ENCODE measurements at regions of chr7 and their contacts with region 1.

Region 1: GRCh38 chr7:133853706-133854276 is 273.3 kb upstream of the LRGUK start:
- DNase-seq: peak; percentile 54
- ATAC-seq: peak; percentile 91
- H3K4me3 ChIP-seq: no peak overlapping the region
- H3K27ac ChIP-seq: no peak overlapping the region
- H3K4me1 ChIP-seq: peaks cover 12 to 17% of the 10 kb centered on the region in 2 experiments; a peak in 3 of 4 replicates
- H3K27me3 ChIP-seq: no peaks in the 10 kb centered on the region
- CTCF ChIP-seq: peak; percentile 70 to 97 (median 73)
- POLR2A ChIP-seq: no peak
- RAD21 ChIP-seq: peak; percentile 52

Region 2: DNA sequence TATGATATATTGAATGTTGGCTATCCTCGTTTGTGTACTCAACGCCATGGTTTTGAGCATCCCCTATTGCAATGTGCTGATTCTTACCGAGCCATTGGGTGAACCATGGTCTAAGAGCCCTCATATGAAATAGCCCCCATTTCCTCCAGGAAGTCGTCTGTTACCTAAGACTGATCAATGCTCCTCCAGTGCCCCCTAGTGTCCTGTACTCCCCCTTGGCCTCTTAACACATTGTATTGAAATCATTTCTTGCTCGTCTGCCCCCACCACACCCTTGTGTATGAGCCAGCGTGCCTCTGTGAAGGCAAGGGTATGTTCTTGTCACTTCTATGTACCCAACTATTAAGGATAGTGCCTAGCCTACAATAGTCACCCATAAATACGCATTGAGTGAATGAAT is 474.1 kb after region 1 on chr7:
- CTCF ChIA-PET with region 1: no interaction called
- POLR2A ChIA-PET with region 1: no interaction called
- RAD21 ChIA-PET with region 1: no interaction called
- intact Hi-C with region 1: loop called (anchors 10 kb)
- DNase-seq: peak; percentile 75
- ATAC-seq: peak; percentile 98
- H3K4me3 ChIP-seq: no peak overlapping the region
- H3K27ac ChIP-seq: no peak overlapping the region
- H3K4me1 ChIP-seq: no peaks in the 10 kb centered on the region
- H3K27me3 ChIP-seq: no peaks in the 10 kb centered on the region
- CTCF ChIP-seq: peak; percentile 51 to 67 (median 67); a peak in 5 of 6 replicates
- POLR2A ChIP-seq: no peak
- RAD21 ChIP-seq: peak; percentile 79